ENCODE measurements at regions of chr12 and their contacts with region 1.

Region 1: GRCh38 chr12:131621701-131622421 is 89.0 kb upstream of the SFSWAP start:
- DNase-seq: peak; percentile 43 to 91 (median 88)
- H3K4me3 ChIP-seq: peak overlapping the region in 58 of 59 donors; percentile 11 to 72 (median 44)
- H3K27ac ChIP-seq: peak overlapping the region; percentile 51 to 99 (median 94)
- H3K27me3 ChIP-seq: no peaks in the 10 kb centered on the region
- CTCF ChIP-seq: peak in 3 of 56 donors; percentile 7 to 11 (median 10)

Region 2: GRCh38 chr12:130879212-130879686 is 742.6 kb before region 1 on chr12:
- intact Hi-C with region 1: no loop called
- DNase-seq: no peak
- H3K4me3 ChIP-seq: no peak overlapping the region
- H3K27ac ChIP-seq: no peak overlapping the region
- H3K27me3 ChIP-seq: no peaks in the 10 kb centered on the region
- CTCF ChIP-seq: no peak

Region 3: DNA sequence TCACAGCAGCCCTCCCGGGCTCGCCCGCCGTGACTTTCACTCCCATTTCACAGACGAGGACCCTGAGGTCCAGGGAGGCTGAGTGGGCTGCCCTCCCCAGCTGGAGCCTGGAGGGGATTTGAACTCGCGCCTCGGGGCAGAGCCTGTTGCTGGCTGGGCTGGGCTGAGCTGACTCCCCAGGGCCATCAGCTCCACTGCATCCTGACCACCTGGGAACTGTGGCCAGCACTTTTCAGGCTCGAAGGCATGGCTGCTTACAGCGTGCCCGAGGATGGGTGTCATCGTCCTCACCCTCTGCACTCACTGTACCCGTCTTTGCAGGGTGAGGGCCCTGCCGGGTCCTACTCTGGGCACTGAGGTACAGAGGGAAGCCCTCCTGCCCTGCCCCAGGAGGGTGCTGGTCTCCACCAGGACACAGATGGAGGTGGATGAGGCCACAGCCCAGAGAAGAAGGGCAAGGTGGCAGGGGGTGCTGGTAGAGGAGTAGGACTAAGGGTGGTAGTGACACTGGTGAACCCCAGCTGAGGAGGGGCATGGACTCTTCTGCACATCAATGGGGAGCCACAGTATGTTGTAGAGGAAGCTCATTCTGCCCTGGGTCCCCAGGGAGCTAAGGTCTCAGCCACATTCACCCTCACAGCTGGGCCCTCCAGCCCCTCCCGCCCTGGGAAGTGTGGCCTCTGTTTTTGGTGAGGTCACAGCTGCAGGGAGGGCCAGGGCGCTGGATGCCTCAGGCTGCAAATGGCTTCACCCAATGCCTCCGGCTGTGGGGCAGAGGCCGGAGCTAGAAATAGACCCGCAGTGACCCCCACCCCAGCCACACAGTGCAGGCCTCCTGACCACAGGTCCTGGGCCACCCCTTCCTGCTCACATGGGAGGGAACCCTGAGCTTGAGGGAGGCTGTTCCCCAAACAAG is 276.1 kb before region 1 on chr12:
- intact Hi-C with region 1: loop called in 1 of 2 experiments (anchors 2 kb)
- DNase-seq: no peak
- H3K4me3 ChIP-seq: no peak overlapping the region
- H3K27ac ChIP-seq: peak overlapping the region in 23 of 59 donors; percentile 18 to 79 (median 68)
- H3K27me3 ChIP-seq: peaks cover 0 to 12% (median 0%) of the 10 kb centered on the region in 45 donors
- CTCF ChIP-seq: no peak

Region 4: DNA sequence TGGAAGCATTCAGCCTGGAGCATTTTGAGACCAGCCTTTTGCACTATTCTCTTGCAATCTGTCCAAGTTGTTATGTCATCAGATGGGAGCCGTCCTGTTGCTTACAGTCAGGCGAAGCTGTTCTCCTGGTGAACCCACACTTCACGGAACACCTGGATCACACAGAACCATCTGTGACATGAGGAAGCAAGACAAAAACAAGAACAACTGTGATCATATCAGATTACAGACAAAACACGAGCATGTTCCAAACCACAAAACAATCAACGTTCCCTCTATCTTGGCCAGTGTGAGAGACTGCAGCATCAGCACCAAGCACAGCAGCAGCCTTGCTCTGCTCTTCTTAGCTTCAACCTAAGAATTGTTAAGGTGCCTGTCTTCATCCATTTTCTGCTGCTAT is 91.4 kb before region 1 on chr12:
- intact Hi-C with region 1: no loop called
- DNase-seq: no peak
- H3K4me3 ChIP-seq: no peak overlapping the region
- H3K27ac ChIP-seq: peak overlapping the region in 1 of 59 donors; percentile 1
- H3K27me3 ChIP-seq: peaks cover 0 to 7% (median 0%) of the 10 kb centered on the region in 45 donors
- CTCF ChIP-seq: no peak

Region 5: DNA sequence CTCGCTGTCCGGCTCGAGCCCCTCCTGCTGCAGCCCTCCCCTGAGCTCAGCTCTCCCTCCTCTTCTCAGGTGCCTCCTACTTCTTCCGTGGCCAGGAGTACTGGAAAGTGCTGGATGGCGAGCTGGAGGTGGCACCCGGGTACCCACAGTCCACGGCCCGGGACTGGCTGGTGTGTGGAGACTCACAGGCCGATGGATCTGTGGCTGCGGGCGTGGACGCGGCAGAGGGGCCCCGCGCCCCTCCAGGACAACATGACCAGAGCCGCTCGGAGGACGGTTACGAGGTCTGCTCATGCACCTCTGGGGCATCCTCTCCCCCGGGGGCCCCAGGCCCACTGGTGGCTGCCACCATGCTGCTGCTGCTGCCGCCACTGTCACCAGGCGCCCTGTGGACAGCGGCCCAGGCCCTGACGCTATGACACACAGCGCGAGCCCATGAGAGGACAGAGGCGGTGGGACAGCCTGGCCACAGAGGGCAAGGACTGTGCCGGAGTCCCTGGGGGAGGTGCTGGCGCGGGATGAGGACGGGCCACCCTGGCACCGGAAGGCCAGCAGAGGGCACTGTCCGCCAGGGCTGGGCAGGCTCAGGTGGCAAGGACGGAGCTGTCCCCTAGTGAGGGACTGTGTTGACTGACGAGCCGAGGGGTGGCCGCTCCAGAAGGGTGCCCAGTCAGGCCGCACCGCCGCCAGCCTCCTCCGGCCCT is 229.1 kb after region 1 on chr12:
- intact Hi-C with region 1: no loop called
- DNase-seq: peak in 2 of 10 donors; percentile 47 to 67
- H3K4me3 ChIP-seq: peak overlapping the region in 2 of 59 donors; percentile 13 to 26
- H3K27ac ChIP-seq: peak overlapping the region in 4 of 59 donors; percentile 2 to 53 (median 24)
- H3K27me3 ChIP-seq: peaks cover 0 to 8% (median 0%) of the 10 kb centered on the region in 45 donors
- CTCF ChIP-seq: peak in 30 of 56 donors; percentile 27 to 82 (median 58)

Measured in dorsolateral prefrontal cortex (tissue), 120 donors.